ENCODE measurements at regions of chr1 and their contacts with region 1.

Region 1: GRCh38 chr1:92994105-92994712 is 32.9 kb upstream of the DIPK1A start:
- DNase-seq: peak; percentile 78

Region 2: DNA sequence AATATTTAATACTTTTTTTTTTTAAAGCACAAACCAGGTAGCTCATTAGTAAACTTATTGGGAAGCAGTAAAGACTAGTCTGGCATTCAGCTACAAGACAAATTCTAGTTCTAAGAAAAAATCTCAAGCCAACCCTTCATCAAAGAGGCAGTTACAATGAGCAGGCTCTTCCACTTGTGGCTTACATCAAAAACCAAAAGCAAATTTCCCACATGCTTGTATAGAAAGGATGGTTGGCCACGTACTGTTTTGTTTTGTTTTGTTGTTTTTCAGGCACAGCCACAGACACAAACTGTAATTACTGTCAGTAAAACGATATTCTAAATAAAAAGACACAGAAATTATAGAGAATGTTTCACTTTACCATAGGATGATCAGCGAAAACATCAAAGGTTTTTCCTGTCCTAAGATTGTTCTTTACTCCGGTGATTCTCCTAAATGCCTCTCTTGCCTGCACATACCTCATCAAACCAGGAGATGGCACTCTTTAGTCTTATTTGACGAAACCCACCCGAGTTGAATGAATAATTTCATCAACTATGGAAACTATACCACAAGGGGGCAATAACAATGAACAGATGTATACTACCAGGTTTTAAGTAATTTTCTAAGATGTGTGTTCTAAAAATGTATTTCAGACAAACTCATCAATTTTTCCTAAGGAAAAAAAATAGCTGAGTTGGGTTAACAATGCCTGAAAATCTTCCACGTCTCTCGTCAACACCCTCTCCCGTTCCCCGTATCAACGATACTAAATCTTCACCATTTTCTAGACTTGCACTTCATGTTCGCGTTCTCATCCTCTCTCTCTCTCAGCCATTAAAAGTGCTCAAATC is 135.4 kb before region 1 on chr1:
- CTCF ChIA-PET with region 1: interaction called, 55 read pairs
- POLR2A ChIA-PET with region 1: no interaction called
- DNase-seq: peak; percentile 73

Region 3: GRCh38 chr1:92960395-92961130 is 33.6 kb before region 1 on chr1:
- CTCF ChIA-PET with region 1: interaction called, 13 read pairs
- POLR2A ChIA-PET with region 1: interaction called, 6 read pairs
- DNase-seq: peak; percentile 79

Region 4: GRCh38 chr1:93014168-93014567 is 20.0 kb after region 1 on chr1:
- CTCF ChIA-PET with region 1: interaction called, 10 read pairs
- POLR2A ChIA-PET with region 1: no interaction called
- DNase-seq: no peak

Measured in HEK293T (cell line).